Activated CD4-positive, alpha-beta memory T cell treated with anti-CD3 and anti-CD28 coated beads for 36 hours (primary cell): ENCODE measurements at regions of chr12 and their contacts with region 1.

Region 1: GRCh38 chr12:119115296-119115905 is 63.3 kb upstream of the HSPB8 start:
- DNase-seq: peak; percentile 10
- H3K4me3 Mint-ChIP-seq: no peak overlapping the region
- H3K27ac Mint-ChIP-seq: no peak overlapping the region
- H3K4me1 Mint-ChIP-seq: no peaks in the 10 kb centered on the region
- H3K27me3 Mint-ChIP-seq: peaks cover 2% of the 10 kb centered on the region

Region 2: GRCh38 chr12:119328111-119328510 is 212.7 kb after region 1 on chr12:
- CTCF ChIA-PET with region 1: no interaction called
- POLR2A ChIA-PET with region 1: no interaction called
- intact Hi-C with region 1: loop called (anchors 10 kb)
- DNase-seq: no peak
- H3K4me3 Mint-ChIP-seq: no peak overlapping the region
- H3K27ac Mint-ChIP-seq: no peak overlapping the region
- H3K4me1 Mint-ChIP-seq: no peaks in the 10 kb centered on the region
- H3K27me3 Mint-ChIP-seq: peaks cover 5% of the 10 kb centered on the region

Region 3: DNA sequence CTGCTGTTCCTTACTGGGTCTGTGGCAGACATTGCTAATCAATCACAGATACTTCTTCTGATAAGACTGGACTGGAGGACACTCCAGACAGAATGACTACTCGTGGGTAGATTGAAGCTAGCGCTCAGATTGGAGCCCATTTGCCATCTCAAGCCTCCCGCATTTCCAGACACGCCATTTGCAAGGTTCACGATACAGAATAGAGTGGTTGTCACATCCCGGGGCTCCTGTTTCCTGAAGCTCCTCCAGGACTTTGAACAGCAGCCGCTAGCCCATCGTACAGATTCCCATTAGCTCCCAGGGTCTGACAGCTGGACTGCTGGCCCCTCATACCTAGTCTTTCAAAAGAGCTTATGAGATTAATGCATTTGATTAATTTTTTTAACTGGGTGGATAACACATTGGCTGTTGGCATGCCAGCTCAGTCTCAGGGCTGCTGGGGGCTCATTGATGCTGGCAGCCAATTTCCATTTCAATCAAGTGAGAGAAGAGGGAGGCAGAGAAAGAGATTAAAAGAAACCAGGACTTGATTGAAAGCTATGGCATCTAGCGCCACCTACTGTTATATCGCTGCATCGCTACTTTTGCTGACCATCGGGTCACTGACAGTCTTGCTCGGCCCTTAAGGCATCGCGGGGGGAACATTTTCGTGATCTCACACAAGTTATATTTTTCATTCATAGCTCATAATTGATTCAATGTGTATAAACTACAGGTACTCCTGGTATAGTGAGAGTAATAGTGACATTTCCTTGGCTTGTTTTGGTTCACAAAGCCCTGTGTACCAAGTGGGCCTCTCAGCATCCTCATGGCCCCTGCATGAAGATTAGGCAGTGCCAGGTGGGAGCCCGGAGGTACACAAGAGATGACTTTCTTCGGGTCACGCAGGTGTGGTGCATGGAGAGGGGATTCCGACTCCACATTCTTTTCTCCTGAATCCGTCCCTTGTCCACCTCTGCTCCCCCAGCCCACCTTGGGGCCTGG is 297.7 kb after region 1 on chr12:
- CTCF ChIA-PET with region 1: no interaction called
- POLR2A ChIA-PET with region 1: no interaction called
- intact Hi-C with region 1: loop called (anchors 5 kb)
- DNase-seq: peak; percentile 55
- H3K4me3 Mint-ChIP-seq: no peak overlapping the region
- H3K27ac Mint-ChIP-seq: no peak overlapping the region
- H3K4me1 Mint-ChIP-seq: no peaks in the 10 kb centered on the region
- H3K27me3 Mint-ChIP-seq: peaks cover 3% of the 10 kb centered on the region